GM10248 (cell line): ENCODE measurements at regions of chr9 and their contacts with region 1.

Region 1: DNA sequence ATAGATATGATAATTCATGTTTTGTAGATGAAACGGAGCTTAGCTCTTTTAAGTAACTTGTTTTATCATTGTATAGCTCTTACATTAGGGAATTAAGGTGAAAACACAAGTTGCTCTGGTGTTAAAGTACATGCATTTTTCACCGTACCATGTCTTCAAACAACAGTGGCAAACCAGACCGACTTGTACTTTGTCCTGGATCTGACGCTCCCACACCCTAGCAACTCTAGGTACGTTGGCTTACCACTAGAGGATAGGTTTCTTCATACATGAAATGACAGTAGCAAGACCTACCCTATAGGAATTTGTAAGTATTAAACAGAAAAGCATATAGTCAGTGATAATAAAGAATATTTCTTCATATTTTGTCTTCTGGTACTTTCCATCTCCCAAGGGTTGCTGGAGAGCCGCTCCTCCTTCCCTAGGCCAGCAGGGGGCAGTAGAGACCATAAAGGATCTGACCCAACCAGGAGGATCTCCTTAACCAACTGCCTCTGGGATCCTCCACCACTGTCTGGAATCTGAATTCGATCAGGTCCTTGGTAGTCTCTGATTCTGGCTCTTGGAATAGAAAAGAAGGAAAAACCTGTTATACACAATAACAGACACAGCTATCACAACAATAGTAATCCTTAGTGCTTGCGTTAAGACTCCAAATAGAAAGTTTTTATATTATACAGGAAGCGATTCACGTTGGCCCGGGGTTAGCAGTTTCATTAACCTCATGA is 136.7 kb downstream of the CAVIN4 start:
- DNase-seq: peak; percentile 62
- CTCF ChIP-seq: peak; percentile 79

Region 2: DNA sequence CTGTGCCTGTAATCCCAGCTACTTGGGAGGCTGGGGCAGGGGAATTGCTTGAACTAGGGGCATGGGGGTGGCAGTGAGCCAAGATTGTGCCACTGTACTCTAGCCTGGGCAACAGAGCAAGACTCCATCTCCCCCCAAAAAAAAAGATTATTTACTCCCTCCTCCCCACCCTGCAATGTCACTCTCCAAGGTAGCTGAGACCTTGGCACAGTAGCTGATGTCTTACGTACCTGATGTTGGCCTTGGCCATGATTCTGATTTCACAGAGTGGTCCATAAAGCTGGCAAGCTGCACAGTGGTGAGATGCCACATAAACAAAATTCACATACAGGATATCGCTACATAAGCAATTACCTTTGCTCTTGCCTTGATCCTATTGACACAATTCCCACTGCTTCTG is 28.1 kb before region 1 on chr9:
- CTCF ChIA-PET with region 1: interaction called, 10 read pairs
- POLR2A ChIA-PET with region 1: no interaction called
- DNase-seq: no peak
- CTCF ChIP-seq: no peak

Region 3: GRCh38 chr9:100700689-100701318 is 13.7 kb before region 1 on chr9:
- CTCF ChIA-PET with region 1: interaction called, 31 read pairs
- POLR2A ChIA-PET with region 1: no interaction called
- DNase-seq: no peak
- CTCF ChIP-seq: peak; percentile 32

Region 4: GRCh38 chr9:100730086-100730485 is 15.6 kb after region 1 on chr9:
- CTCF ChIA-PET with region 1: interaction called, 13 read pairs
- POLR2A ChIA-PET with region 1: no interaction called
- DNase-seq: no peak
- CTCF ChIP-seq: no peak